ENCODE measurements at regions of chr16 and their contacts with region 1.

Region 1: GRCh38 chr16:57284208-57284951 is at the start of gene PLLP:
- DNase-seq: peak; percentile 38
- H3K4me3 ChIP-seq: peak within 1 kb of the TSS; percentile 8 to 38 (median 16)
- H3K27ac ChIP-seq: no peak within 1 kb of the TSS
- H3K4me1 ChIP-seq: peaks cover 18% of the 10 kb centered on the region
- H3K27me3 ChIP-seq: no peaks in the 10 kb centered on the region
- CTCF ChIP-seq: no peak
- POLR2A ChIP-seq: no peak
- total RNA-seq, gene PLLP: 3.1 and 4.4 TPM in 2 replicates

Region 2: GRCh38 chr16:57235128-57236021 is 49.0 kb before region 1 on chr16:
- CTCF ChIA-PET with region 1: no interaction called
- POLR2A ChIA-PET with region 1: no interaction called
- dilution Hi-C with region 1: no loop called
- intact Hi-C with region 1: no loop called
- DNase-seq: peak; percentile 6
- H3K4me3 ChIP-seq: no peak overlapping the region
- H3K27ac ChIP-seq: no peak overlapping the region
- H3K4me1 ChIP-seq: no peaks in the 10 kb centered on the region
- H3K27me3 ChIP-seq: no peaks in the 10 kb centered on the region
- CTCF ChIP-seq: no peak
- POLR2A ChIP-seq: no peak

Region 3: GRCh38 chr16:57265850-57266530 is 18.4 kb before region 1 on chr16:
- CTCF ChIA-PET with region 1: interaction called, 3 read pairs
- POLR2A ChIA-PET with region 1: no interaction called
- dilution Hi-C with region 1: no loop called
- intact Hi-C with region 1: loop called (anchors 2 kb)
- DNase-seq: peak; percentile 83
- H3K4me3 ChIP-seq: peak overlapping the region in 1 of 3 experiments; percentile 41
- H3K27ac ChIP-seq: peak overlapping the region; percentile 77
- H3K4me1 ChIP-seq: peaks cover 21% of the 10 kb centered on the region
- H3K27me3 ChIP-seq: no peaks in the 10 kb centered on the region
- CTCF ChIP-seq: no peak
- POLR2A ChIP-seq: peak; percentile 49

Region 4: DNA sequence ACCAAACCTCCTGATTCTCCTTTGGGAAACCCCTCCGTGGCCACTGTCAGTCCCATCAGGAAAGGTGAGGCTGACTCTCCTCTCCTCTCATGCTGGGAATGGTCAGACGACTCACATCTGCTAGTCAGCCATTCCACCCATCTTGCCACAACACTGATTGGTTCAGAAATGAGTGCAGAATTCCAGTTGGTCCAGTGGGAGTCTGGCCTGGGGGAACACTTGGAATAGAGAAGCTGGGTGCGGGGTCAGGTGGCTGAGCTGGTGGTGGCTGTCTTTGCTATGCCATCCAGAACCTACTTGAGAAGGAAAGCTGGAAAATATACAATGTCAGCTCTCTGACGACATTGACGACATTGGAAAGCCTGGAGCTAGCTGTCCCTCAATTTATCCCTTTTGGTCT is 23.7 kb after region 1 on chr16:
- CTCF ChIA-PET with region 1: no interaction called
- POLR2A ChIA-PET with region 1: no interaction called
- dilution Hi-C with region 1: no loop called
- intact Hi-C with region 1: no loop called
- DNase-seq: no peak
- H3K4me3 ChIP-seq: no peak overlapping the region
- H3K27ac ChIP-seq: no peak overlapping the region
- H3K4me1 ChIP-seq: peaks cover 6% of the 10 kb centered on the region
- H3K27me3 ChIP-seq: no peaks in the 10 kb centered on the region
- CTCF ChIP-seq: no peak
- POLR2A ChIP-seq: no peak

Measured in endothelial cell of umbilical vein (primary cell).